Activated naive CD4-positive, alpha-beta T cell treated with anti-CD3 and anti-CD28 coated beads for 36 hours (primary cell): ENCODE measurements at regions of chrX and their contacts with region 1.

Region 1: DNA sequence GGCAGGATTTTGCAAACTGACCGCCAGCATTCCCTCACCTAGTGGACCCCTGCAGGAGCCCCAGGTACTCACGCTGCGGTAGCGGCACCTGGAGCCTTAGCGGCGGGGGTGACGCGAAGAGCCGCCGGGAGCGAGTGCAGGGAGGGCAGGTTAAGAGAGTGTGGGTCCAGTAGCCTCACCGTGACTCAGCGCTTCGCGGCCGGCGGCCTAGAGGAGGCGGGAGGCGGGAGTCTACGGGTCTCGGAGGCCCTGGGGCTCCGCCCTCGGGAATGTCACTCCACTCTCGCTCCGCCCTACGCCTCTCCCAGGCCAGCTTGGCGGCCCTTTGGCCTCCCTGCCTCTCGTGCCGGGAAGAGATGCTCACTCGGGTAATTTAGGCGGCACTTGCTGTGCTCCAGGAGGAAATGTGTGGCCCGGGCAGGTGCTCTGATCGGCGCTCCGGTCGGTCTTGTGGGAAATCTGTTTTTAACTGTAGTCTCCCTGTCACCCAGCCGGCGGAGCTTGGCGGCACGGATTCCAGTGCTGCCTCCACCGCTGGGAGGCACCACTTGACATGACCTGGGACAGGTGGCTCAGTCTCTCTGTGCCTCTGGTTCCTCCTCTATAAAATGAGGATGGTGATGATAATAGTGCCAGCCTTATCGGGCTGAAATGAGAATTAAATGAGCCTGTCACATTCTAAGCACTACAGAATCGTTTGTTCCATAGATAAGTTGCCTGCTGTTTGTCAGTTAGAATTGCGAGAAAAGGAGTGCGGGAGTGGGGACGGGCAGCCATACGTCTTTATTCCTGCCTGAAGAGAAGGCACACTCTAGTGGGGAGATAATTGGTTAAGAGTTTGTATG is at the start of gene PIR:
- DNase-seq: peak; percentile 75
- H3K4me3 Mint-ChIP-seq: peak within 1 kb of the TSS; percentile 83
- H3K27ac Mint-ChIP-seq: peak within 1 kb of the TSS; percentile 68
- H3K4me1 Mint-ChIP-seq: peaks cover 6% of the 10 kb centered on the region
- H3K27me3 Mint-ChIP-seq: no peaks in the 10 kb centered on the region
- total RNA-seq, gene PIR: 6.2 to 9.2 TPM

Region 2: DNA sequence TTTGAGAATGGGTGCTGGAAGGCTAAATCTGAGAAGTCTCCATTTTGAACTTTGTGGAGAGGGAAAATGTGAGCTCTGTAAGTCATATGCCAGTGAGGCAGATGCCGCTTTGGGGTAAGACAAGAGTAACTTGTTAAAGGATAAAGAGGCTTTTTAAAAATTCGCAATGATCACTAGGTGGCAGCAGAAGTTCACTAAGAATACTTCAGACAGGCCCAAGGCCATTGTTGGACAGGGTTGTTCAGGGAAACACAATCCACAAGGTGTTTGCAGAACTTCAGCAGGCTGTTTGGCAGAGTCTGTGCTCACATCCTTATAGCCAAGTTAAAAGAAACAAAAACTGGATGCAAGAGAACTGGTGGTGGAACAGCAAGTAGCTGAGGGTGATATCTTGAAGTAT is 144.3 kb before region 1 on chrX:
- CTCF ChIA-PET with region 1: interaction called, 10 read pairs
- intact Hi-C with region 1: no loop called
- DNase-seq: peak; percentile 17
- H3K4me3 Mint-ChIP-seq: no peak overlapping the region
- H3K27ac Mint-ChIP-seq: no peak overlapping the region
- H3K4me1 Mint-ChIP-seq: no peaks in the 10 kb centered on the region
- H3K27me3 Mint-ChIP-seq: peaks cover 2% of the 10 kb centered on the region

Region 3: GRCh38 chrX:15564981-15565579 is 71.7 kb after region 1 on chrX:
- CTCF ChIA-PET with region 1: interaction called, 3 read pairs
- intact Hi-C with region 1: loop called (anchors 1 kb)
- DNase-seq: peak; percentile 46
- H3K4me3 Mint-ChIP-seq: no peak overlapping the region
- H3K27ac Mint-ChIP-seq: no peak overlapping the region
- H3K4me1 Mint-ChIP-seq: no peaks in the 10 kb centered on the region
- H3K27me3 Mint-ChIP-seq: peaks cover 4% of the 10 kb centered on the region

Region 4: DNA sequence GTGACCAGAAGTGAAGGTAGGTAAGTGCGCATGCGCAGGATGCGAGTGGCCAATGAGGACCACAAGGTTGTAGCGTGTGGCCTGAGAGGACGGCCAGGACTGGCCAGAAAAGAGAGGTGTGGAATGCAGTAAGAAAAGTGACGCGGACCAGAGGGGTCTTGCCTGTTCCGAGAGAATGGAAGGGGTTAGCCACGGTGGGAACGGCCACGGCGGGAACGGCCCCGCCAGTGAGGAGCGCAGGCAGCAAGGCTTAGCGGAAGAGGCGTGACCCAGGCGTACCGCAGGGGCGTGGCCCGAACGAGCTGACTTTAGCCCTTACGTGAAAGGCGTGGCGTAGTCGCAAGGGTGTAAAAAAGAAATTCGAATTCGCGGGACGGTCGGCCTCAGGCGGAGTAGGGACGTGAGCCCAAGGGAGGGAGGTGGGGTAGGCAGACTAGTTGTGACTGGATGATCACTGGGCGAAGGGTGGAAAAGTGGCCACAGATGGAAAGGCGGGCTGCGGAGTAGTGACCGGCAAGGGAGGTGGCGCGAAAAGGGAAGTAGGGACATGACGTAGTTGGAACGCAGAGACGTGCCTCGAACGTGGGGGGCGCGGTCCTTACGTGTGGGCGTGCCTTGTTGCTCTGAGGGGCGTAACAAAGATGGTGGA is 181.6 kb after region 1 on chrX:
- CTCF ChIA-PET with region 1: interaction called, 3 read pairs
- intact Hi-C with region 1: loop called (anchors 1 kb)
- DNase-seq: peak; percentile 85
- H3K4me3 Mint-ChIP-seq: no peak overlapping the region
- H3K27ac Mint-ChIP-seq: no peak overlapping the region
- H3K4me1 Mint-ChIP-seq: peaks cover 21% of the 10 kb centered on the region
- H3K27me3 Mint-ChIP-seq: no peaks in the 10 kb centered on the region

Region 5: GRCh38 chrX:15789979-15790768 is 296.8 kb after region 1 on chrX and contains the start of gene ZRSR2:
- CTCF ChIA-PET with region 1: no interaction called
- intact Hi-C with region 1: loop called (anchors 10 kb)
- DNase-seq: peak; percentile 88
- H3K4me3 Mint-ChIP-seq: no peak within 1 kb of the TSS
- H3K27ac Mint-ChIP-seq: no peak within 1 kb of the TSS
- H3K4me1 Mint-ChIP-seq: peaks cover 16% of the 10 kb centered on the region
- H3K27me3 Mint-ChIP-seq: no peaks in the 10 kb centered on the region
- total RNA-seq, gene ZRSR2: 15.7 to 16.7 TPM